Naive thymus-derived CD4-positive, alpha-beta T cell (primary cell): ENCODE measurements at regions of chr17 and their contacts with region 1.

Region 1: DNA sequence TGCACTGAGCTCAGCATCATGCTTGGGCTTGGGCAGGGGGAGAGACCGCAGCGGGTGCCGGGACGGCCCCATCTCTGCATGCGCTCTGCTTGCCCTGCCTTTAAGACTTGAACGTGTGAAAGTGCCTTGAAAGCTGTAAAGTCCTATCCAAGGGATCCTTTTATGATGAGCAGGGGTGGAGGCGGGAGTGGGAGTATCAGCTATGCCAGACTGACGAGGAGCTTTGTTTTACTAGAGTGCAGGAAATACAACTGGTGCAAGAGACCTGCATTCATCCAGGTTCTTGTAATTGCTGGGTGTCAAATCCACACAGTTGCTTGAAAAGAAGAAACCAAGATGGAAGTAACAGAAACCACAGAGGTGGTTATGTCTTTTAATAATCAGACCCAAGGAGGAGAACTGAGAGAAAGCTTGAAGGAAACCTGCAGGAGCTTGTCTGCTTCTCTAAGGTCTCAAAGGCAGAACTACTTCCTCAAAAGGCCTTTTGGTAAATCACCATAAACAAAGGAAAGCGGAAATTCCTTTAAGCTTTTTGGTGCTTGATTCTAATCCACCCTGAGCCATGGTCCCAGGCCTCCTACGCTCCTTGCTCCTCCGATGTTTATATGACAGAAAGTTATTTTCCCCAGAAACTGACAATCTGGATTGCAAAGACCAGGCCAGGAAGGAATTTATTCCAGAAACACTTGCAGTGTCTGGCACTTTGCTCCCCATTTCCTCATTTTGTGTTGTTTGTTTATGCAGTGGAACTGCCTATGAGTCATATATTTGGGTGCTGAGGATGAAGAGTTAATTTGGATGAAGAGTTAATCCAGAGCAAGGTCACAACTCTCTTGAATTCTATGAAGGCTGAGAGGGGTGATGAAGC is 51.3 kb upstream of the FBXO47 start:
- DNase-seq: peak in 8 of 9 donors; percentile 16 to 30 (median 22)
- ATAC-seq: peak; percentile 22
- H3K4me3 ChIP-seq: peak overlapping the region; percentile 8
- H3K4me3 Mint-ChIP-seq: peak overlapping the region; percentile 21 to 74 (median 62)
- H3K27ac ChIP-seq: peak overlapping the region; percentile 37
- H3K27ac Mint-ChIP-seq: peak overlapping the region; percentile 71 to 97 (median 92)
- H3K4me1 ChIP-seq: peaks cover 0 to 38% of the 10 kb centered on the region in 2 donors
- H3K4me1 Mint-ChIP-seq: peaks cover 23 to 50% (median 40%) of the 10 kb centered on the region in 7 donors
- H3K27me3 ChIP-seq: no peaks in the 10 kb centered on the region
- H3K27me3 Mint-ChIP-seq: no peaks in the 10 kb centered on the region

Region 2: DNA sequence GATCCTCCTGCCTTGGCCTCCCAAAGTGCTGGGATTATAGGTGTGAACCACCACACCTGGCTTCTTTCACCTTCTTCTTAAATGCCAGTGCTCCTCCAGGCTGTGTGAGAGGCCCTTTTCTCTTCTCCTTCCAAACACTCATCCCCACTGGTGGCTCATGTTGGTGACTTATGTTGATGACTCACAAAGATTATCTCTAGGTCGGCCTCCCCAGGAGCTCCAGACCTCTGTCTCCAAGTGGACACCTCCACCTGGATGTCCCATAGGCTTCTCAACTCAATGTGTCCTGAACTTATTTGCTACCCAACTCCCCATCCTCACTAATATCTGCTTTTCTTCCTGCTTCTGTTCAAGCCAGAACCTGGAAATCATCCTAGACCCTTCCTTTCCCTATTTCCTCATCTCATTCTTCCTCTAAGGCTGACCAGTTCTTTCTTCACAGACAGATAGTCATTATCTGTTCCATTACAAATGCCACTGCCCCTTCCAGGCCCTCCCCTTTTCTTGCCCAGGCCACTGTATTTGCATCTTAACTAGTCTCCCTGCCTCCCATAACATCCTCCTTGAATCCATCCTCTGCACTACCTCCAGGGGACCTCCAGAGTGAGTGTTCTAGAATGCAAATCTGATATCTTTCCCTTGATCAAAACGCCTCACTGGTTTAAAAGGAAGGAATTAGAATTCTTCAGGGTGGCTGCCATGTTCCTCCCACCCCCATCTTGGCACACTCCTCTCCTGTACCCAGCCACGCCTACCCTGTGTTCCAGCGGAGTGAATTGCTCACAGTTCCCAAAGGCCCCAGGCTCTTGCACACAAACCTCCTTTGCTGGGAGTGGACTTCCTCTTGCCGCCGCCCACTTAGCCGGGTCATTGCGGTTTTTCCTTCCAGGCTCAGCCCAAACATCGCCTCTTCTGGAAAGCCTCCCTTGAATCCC is 16.5 kb before region 1 on chr17:
- CTCF ChIA-PET with region 1: interaction called, 4 read pairs
- POLR2A ChIA-PET with region 1: interaction called, 8 read pairs
- intact Hi-C with region 1: loop called in 1 of 2 experiments (anchors 2 kb)
- DNase-seq: no peak
- ATAC-seq: peak; percentile 56
- H3K4me3 ChIP-seq: no peak overlapping the region
- H3K4me3 Mint-ChIP-seq: peak overlapping the region in 6 of 10 donors; percentile 63 to 89 (median 79)
- H3K27ac ChIP-seq: no peak overlapping the region
- H3K27ac Mint-ChIP-seq: peak overlapping the region in 8 of 9 donors; percentile 33 to 93 (median 88)
- H3K4me1 ChIP-seq: peaks cover 4 to 29% of the 10 kb centered on the region in 2 donors
- H3K4me1 Mint-ChIP-seq: peaks cover 20 to 41% (median 36%) of the 10 kb centered on the region in 7 donors
- H3K27me3 ChIP-seq: no peaks in the 10 kb centered on the region
- H3K27me3 Mint-ChIP-seq: peaks cover 0 to 8% (median 0%) of the 10 kb centered on the region in 5 donors

Region 3: GRCh38 chr17:39057701-39058206 is 39.3 kb after region 1 on chr17:
- CTCF ChIA-PET with region 1: interaction called, 4 read pairs
- POLR2A ChIA-PET with region 1: interaction called, 3 read pairs
- intact Hi-C with region 1: loop called (anchors 1 to 5 kb)
- DNase-seq: no peak
- ATAC-seq: no peak
- H3K4me3 ChIP-seq: peak overlapping the region; percentile 65
- H3K4me3 Mint-ChIP-seq: peak overlapping the region; percentile 66 to 90 (median 84)
- H3K27ac ChIP-seq: no peak overlapping the region
- H3K27ac Mint-ChIP-seq: peak overlapping the region in 6 of 9 donors; percentile 25 to 87 (median 68)
- H3K4me1 ChIP-seq: no peaks in the 10 kb centered on the region
- H3K4me1 Mint-ChIP-seq: peaks cover 6 to 28% (median 17%) of the 10 kb centered on the region in 7 donors
- H3K27me3 ChIP-seq: no peaks in the 10 kb centered on the region
- H3K27me3 Mint-ChIP-seq: peaks cover 0 to 10% (median 0%) of the 10 kb centered on the region in 5 donors